Activated naive CD4-positive, alpha-beta T cell treated with anti-CD3 and anti-CD28 coated beads for 36 hours (primary cell): ENCODE measurements at regions of chr1 and their contacts with region 1.

Region 1: DNA sequence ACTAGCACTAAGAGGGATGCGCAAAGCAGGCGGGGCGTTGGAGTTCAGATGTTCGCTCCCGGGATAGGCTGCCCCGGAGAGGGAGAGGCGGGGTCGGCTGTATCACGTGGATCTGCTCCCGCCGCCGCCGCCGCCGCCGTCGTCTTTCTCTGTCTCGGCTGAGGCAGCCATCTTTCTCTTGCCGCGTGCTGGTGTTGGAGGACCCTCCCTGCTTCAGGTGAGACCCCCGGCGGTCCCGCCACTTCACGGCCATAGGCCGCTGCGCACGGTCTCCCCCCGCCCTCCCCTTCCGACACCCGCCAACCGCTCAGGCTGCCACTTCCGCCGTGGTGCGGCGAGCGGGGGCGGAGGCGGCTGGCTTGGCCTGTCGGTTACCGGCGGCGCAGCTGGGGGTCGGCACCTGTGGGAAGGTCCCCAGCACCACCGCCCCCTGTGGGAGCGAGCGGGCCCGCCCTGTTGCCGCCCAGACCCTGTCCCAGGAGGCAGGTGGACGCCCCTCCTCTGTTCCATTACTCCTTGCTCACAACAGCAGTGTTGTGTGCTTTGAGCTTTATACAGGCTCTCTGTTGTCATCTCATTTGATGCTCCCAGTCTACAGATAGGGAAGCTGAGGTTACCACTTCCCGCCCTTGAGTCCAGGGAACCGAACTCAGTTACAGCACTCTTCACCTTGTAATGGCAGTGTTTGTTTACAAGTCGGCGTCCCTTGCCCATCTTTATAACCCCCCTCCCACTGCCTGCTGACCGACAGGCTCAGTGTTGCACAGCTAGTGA is at the start of gene BTF3L4:
- DNase-seq: peak; percentile 98
- H3K4me3 Mint-ChIP-seq: peak within 1 kb of the TSS; percentile 94
- H3K27ac Mint-ChIP-seq: peak within 1 kb of the TSS; percentile 98
- H3K4me1 Mint-ChIP-seq: peaks cover 40% of the 10 kb centered on the region
- H3K27me3 Mint-ChIP-seq: no peaks in the 10 kb centered on the region
- total RNA-seq, gene BTF3L4: 38.4 to 38.7 TPM

Region 2: GRCh38 chr1:51235673-51236530 is 820.4 kb before region 1 on chr1 and contains the start of gene RNF11:
- CTCF ChIA-PET with region 1: no interaction called
- intact Hi-C with region 1: loop called (anchors 5 kb)
- DNase-seq: peak; percentile 93
- H3K4me3 Mint-ChIP-seq: peak within 1 kb of the TSS; percentile 96
- H3K27ac Mint-ChIP-seq: peak within 1 kb of the TSS; percentile 89
- H3K4me1 Mint-ChIP-seq: peaks cover 35% of the 10 kb centered on the region
- H3K27me3 Mint-ChIP-seq: no peaks in the 10 kb centered on the region
- total RNA-seq, gene RNF11: 14.9 to 17.7 TPM

Region 3: DNA sequence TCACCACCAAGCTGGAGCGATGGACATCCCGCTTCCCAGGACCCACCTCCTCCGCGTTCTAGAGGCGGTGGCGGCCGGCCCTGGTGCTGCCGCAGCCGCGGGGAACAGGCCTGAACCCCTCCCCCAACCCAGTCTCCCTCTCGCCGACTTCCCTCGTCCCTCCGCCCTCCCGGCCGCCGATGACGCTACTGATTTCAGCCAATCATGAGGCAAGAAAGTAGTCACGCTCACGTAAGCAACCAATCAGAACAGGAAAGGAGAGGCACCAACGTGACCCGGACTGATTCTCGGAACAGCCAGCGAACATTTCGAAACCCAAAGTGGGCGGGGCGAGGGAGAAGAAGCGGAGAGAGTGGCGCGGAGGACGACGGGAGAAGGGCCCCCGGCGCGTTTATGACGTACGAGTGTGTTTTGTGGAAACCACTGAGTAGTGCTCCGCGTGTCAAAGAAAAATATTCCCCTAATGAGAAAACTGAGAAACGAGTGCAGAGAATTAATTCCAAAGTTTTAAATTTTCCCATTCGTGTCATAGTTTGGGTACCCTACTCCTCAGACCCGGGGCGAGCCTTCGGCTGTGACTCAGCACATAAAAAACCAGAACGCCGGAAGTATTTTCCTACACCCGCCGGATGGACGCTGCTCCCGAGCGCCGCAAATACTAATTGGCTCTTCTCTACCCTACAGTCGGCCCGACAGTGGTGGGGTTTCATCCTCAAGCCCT is 177.6 kb before region 1 on chr1 and contains the start of gene NRDC:
- CTCF ChIA-PET with region 1: no interaction called
- intact Hi-C with region 1: loop called (anchors 1 kb)
- DNase-seq: peak; percentile 100
- H3K4me3 Mint-ChIP-seq: no peak within 1 kb of the TSS
- H3K27ac Mint-ChIP-seq: no peak within 1 kb of the TSS
- H3K4me1 Mint-ChIP-seq: peaks cover 26% of the 10 kb centered on the region
- H3K27me3 Mint-ChIP-seq: peaks cover 2% of the 10 kb centered on the region
- total RNA-seq, gene NRDC: 136 to 145 TPM

Region 4: DNA sequence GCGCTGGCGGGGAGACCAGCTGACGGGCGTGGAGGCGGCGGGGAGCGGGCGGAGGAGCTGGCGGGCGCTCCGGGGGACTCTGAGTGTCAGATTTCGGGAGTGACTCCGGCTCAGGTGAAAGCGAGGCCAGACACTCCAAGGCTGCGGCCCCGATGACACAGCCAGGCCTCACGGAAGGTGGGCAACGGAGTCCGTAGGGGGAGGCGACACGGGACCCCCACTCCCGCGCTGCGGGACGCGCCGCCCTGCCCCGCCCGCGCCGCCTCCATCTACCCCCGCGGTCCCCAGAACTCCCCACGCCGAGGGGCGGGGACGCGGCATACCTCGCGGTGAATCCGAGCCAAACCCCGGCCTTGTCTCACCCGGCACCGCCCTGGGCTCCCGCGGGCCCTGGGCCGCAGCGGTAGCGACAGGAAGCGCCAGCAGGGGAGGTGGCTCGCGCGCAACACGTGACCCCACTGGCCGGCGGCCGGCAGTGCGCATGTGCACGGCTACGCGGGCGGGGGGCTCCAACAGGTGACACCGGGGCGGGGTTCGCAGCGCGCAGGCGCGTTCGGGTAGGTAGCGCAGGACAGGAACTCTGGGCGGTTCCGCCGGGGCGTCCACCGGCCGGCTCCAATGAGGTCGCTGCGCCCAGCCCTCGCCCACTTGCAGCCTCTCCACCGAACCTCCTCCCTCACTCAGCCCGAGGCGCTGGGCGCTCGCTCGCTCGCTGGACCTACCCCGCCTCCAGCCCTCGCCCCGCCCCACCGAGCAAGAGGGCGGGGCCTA is 309.6 kb after region 1 on chr1 and contains the start of gene CC2D1B:
- CTCF ChIA-PET with region 1: no interaction called
- intact Hi-C with region 1: loop called (anchors 1 kb)
- DNase-seq: peak; percentile 99
- H3K4me3 Mint-ChIP-seq: peak within 1 kb of the TSS; percentile 97
- H3K27ac Mint-ChIP-seq: peak within 1 kb of the TSS; percentile 88
- H3K4me1 Mint-ChIP-seq: peaks cover 46% of the 10 kb centered on the region
- H3K27me3 Mint-ChIP-seq: no peaks in the 10 kb centered on the region
- total RNA-seq, gene CC2D1B: 18.4 to 21.8 TPM

Region 5: DNA sequence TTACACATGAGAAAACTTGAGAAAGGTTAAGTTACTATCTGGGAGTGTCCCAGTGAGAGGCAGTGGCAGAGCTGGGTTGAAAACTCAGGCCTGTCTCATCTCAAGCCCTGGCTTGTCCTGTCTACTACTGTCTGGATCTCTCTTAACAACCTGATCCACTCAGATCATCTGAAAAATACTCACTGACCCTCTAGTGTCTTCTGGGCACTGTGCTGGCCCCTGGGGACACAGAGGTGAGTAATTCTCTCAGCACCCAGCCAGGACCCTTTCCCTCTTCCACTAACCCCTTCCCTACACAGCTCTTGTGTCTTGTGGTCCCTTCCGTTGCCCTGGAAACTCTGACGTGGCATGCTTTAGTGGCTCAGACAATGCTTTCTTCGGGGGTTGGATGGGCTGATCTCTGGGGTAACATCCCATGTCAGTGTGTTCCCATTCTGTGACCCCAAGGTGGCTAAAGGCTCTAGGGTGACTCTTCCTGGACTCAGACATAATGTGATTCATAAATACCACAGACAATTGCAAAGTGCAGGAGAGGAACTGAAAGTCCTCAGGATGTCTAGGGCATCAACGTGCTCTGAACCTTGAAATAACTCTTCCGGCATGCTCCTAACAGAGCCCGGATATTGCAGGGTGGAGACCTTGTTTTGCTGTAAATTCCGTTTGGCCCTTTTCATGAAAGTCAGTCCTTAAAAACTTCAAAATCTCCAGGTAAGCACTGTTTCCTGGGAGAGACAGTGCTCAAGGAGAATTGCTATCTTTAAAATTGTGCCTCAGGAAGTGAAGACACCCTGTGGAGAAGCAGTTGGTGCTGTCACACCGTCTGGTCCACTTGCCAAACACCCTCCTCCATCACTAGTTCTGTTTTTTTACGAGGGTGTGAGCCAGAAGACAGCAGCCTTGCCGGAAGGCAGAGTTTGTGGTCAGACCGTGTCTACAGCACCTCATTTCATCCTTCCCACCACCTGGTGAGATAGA is 580.7 kb after region 1 on chr1:
- CTCF ChIA-PET with region 1: no interaction called
- intact Hi-C with region 1: loop called (anchors 1 kb)
- DNase-seq: peak; percentile 84
- H3K4me3 Mint-ChIP-seq: peak overlapping the region; percentile 73
- H3K27ac Mint-ChIP-seq: peak overlapping the region; percentile 98
- H3K4me1 Mint-ChIP-seq: peaks cover 79% of the 10 kb centered on the region
- H3K27me3 Mint-ChIP-seq: no peaks in the 10 kb centered on the region

Region 6: GRCh38 chr1:52927212-52928014 is 871.1 kb after region 1 on chr1 and contains the start of gene SCP2:
- CTCF ChIA-PET with region 1: no interaction called
- intact Hi-C with region 1: loop called (anchors 5 kb)
- DNase-seq: peak; percentile 83
- H3K4me3 Mint-ChIP-seq: peak within 1 kb of the TSS; percentile 85
- H3K27ac Mint-ChIP-seq: no peak within 1 kb of the TSS
- H3K4me1 Mint-ChIP-seq: peaks cover 13% of the 10 kb centered on the region
- H3K27me3 Mint-ChIP-seq: no peaks in the 10 kb centered on the region
- total RNA-seq, gene SCP2: 71.8 to 79.2 TPM